HEK293 (cell line): ENCODE measurements at regions of chr2 and their contacts with region 1.

Region 1: DNA sequence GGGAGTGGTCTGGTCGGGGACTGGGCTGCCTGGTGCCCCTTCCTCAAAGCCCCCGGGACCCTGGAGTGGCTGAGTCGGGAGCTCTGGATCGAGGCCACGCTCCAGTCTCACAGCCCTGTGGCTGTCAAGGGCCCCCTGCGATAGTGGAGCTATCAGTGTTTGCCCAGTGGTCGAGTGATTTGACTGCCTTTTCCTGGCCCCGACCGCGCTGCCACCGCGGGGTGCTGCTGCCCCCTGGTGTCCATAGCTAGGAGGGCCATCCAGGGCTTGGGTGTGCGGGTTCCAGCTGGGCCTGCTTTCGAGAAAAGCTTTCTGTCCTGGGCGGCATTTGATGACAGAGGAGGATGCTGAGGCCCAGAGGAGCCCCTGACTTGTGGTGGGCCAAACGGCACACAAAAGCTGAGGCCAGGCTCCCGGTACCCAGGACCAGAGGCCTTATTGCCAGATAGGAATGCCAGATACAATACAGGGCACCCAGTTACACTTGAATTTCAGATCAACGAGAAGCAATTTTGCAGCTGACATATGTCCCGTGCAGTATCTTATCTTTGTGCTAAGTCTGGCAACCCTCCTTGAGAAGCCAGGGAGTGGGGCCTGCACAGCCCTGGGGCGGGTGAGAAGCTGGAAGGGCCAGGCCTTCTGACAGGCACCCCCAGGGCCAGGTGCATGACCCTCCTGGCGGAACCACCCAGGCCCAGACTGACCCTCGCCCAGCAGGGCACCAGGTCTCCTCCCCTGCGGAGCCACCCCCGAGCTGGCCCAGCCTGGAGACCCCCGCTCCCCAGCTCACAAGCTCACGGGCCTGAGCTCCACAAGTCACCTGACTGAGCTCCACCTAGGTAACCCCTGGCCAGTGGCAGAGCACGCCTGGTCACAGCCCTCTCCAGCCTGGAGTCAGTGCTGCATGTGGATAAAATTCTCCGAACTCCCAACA is 13.0 kb downstream of the ODC1 start:
- H3K4me3 ChIP-seq: no peak overlapping the region
- H3K27ac ChIP-seq: no peak overlapping the region
- H3K4me1 ChIP-seq: no peaks in the 10 kb centered on the region
- CTCF ChIP-seq: peak; percentile 92

Region 2: GRCh38 chr2:9799665-9800632 is 635.2 kb before region 1 on chr2:
- CTCF ChIA-PET with region 1: interaction called, 16 read pairs
- POLR2A ChIA-PET with region 1: no interaction called
- H3K4me3 ChIP-seq: no peak overlapping the region
- H3K27ac ChIP-seq: no peak overlapping the region
- H3K4me1 ChIP-seq: peaks cover 3% of the 10 kb centered on the region; the same call in 1 of the 2 replicates
- CTCF ChIP-seq: peak; percentile 98

Region 3: DNA sequence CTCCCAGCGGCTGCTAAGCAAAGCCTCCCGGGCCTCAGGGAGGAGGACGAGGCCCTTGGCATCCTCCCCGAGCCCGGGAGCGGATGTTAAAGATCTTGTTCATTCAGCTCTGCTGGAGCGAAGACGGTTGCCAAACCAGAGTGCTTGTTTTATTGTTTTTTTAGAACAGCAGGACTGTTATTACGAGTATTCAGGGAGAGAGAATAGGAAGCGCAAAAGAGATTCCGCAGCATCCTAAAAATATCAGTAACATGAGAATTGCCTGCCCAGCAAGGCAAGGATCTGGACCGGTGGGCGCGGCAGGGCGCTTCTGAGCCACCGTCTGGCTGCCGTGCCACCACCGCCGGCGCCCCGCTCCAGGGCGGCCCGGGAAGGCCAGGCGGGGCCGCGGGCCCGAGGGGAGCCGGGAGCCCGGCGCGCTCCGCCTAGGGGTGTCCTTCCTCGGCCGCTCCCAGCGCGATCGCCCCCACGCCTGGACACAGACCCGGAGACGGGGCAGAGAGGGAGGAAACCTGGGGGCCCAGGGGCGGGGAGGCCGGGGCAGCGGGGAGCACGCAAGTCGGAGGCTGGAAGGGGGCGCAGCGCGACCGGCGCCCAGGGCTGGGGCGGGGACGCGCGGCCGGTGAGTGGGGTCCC is 355.8 kb before region 1 on chr2:
- CTCF ChIA-PET with region 1: interaction called, 81 read pairs
- POLR2A ChIA-PET with region 1: no interaction called
- H3K4me3 ChIP-seq: peak overlapping the region; percentile 29
- H3K27ac ChIP-seq: peak overlapping the region; percentile 49; the same call in 1 of the 2 replicates
- H3K4me1 ChIP-seq: 0 out of 2 replicates have a peak, but pooled peaks cover 11% of the 10 kb centered on the region
- CTCF ChIP-seq: no peak

Region 4: DNA sequence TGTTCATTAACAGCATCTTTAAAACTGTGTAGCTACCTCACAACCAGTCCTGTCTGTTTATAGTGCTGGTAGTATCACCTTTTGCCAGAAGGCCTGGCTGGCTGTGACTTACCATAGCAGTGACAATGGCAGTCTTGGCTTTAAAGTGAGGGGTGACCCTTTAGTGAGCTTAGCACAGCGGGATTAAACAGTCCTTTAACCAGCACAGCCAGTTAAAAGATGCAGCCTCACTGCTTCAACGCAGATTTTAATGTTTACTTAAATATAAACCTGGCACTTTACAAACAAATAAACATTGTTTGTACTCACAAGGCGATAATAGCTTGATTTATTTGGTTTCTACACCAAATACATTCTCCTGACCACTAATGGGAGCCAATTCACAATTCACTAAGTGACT is 305.7 kb before region 1 on chr2:
- CTCF ChIA-PET with region 1: interaction called, 64 read pairs
- POLR2A ChIA-PET with region 1: interaction called, 5 read pairs
- H3K4me3 ChIP-seq: no peak overlapping the region
- H3K27ac ChIP-seq: no peak overlapping the region
- H3K4me1 ChIP-seq: peaks cover 5% of the 10 kb centered on the region; the same call in 1 of the 2 replicates
- CTCF ChIP-seq: no peak

Region 5: GRCh38 chr2:10414000-10414451 is 21.1 kb before region 1 on chr2:
- CTCF ChIA-PET with region 1: interaction called, 50 read pairs
- POLR2A ChIA-PET with region 1: no interaction called
- H3K4me3 ChIP-seq: no peak overlapping the region
- H3K27ac ChIP-seq: no peak overlapping the region
- H3K4me1 ChIP-seq: peaks cover 2% of the 10 kb centered on the region; the same call in 1 of the 2 replicates
- CTCF ChIP-seq: no peak

Region 6: DNA sequence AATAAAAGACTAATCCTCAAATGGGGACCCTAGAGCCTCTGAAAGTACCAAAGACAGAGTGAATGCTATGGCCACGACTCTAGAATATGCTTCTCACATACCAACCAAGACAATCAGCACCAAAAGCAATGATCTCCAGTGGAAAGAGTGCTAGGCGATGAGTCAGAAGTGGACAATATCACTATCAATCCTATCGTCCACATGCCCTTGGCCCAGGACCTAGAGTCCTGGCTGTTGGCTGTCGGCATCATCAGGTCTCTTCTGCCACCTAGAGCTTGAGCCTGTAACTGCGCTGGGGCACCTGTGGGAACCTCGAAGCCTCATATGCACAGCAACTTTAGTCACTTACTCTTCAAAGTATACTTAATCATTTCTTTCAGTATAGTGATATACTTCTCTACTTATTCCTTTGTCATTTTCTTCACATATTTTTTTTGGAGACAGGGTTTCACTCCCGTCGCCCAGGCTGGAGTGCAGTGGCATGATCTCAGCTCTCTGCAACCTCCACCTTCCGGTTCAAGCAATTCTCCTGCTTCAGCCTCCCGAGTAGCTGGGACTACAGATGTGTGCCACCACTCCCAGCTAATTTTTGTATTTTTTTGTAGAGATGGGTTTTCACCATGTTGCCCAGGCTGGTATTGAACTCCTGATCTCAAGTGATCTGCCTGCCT is 224.9 kb after region 1 on chr2:
- CTCF ChIA-PET with region 1: interaction called, 14 read pairs
- POLR2A ChIA-PET with region 1: interaction called, 6 read pairs
- H3K4me3 ChIP-seq: no peak overlapping the region
- H3K27ac ChIP-seq: no peak overlapping the region
- H3K4me1 ChIP-seq: no peaks in the 10 kb centered on the region
- CTCF ChIP-seq: no peak

Region 7: GRCh38 chr2:11154923-11155380 is 719.8 kb after region 1 on chr2:
- CTCF ChIA-PET with region 1: no interaction called
- POLR2A ChIA-PET with region 1: no interaction called
- H3K4me3 ChIP-seq: peak overlapping the region; percentile 35
- H3K27ac ChIP-seq: peak overlapping the region; percentile 49; the same call in 1 of the 2 replicates
- H3K4me1 ChIP-seq: no peaks in the 10 kb centered on the region
- CTCF ChIP-seq: no peak